ENCODE measurements at regions of chr10 and their contacts with region 1.

Region 1: GRCh38 chr10:76504823-76505222 is 1073.4 kb downstream of the LRMDA start:
- DNase-seq: no peak
- ATAC-seq: no peak
- H3K4me3 Mint-ChIP-seq: no peak overlapping the region
- H3K27ac Mint-ChIP-seq: no peak overlapping the region
- H3K4me1 Mint-ChIP-seq: no peaks in the 10 kb centered on the region
- H3K27me3 Mint-ChIP-seq: no peaks in the 10 kb centered on the region
- CTCF ChIP-seq: no peak

Region 2: DNA sequence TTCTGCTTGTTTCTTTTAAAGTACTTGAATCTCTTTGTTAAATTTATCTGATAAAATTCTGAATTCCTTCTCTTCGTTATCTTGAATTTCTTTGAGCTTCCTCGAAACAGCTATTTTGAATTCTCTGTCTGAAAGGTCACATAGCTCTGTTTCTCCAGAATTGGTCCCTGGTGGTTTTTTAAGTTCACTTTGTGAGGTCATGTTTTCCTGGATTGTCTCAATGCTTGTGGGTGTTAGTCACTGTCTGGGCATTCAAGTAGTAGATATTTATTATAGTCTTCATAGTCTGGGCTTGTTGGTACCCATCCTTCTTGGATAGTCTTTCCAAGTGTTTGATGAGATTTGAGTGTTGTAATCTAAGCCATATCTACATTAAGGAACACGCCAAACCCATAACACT is 12.8 kb before region 1 on chr10:
- CTCF ChIA-PET with region 1: no interaction called
- POLR2A ChIA-PET with region 1: no interaction called
- intact Hi-C with region 1: loop called (anchors 1 kb)
- DNase-seq: no peak
- ATAC-seq: no peak
- H3K4me3 Mint-ChIP-seq: no peak overlapping the region
- H3K27ac Mint-ChIP-seq: no peak overlapping the region
- H3K4me1 Mint-ChIP-seq: no peaks in the 10 kb centered on the region
- H3K27me3 Mint-ChIP-seq: no peaks in the 10 kb centered on the region
- CTCF ChIP-seq: no peak